GM10248 (cell line): ENCODE measurements at regions of chr3 and their contacts with region 1.

Region 1: DNA sequence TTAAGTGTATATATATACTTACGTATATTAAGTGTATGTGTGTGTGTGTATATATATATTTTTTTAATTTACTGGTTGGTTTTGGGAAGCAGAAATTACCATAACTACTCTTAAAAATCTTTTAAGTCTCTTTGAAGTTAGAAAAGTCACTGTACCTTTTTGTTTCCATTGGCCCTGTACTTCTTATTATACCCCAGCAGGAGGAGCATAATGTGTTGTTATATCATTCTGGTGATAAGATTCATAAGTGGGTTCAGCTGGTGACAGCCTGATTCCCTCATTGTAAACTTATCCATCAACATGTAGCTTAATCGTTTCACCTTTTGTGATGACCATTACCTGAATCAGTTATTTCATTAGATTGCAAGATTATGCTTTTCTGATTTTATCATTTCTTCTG is 30.8 kb downstream of the MLH1 start:
- DNase-seq: no peak
- CTCF ChIP-seq: peak; percentile 32

Region 2: DNA sequence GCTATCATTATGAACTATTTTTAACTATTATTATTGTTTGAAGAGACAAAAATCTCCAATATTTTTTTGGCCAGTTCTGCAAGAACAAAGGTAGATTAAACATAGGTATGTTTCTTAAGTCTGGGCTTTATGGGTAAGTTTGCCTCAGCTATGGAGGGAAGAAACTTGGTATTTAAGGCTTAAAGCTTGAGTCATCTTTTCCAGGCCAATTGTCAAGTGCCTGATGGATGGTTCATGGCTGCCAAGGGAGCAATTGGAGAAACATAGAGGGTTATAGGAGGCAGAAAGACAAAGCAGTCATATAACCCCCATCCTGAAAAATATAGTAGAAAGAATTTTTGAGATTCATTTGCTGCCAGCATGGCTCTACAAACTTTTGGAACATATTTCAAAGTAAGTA is 651.0 kb before region 1 on chr3:
- CTCF ChIA-PET with region 1: no interaction called
- POLR2A ChIA-PET with region 1: no interaction called
- DNase-seq: no peak
- CTCF ChIP-seq: no peak

Region 3: DNA sequence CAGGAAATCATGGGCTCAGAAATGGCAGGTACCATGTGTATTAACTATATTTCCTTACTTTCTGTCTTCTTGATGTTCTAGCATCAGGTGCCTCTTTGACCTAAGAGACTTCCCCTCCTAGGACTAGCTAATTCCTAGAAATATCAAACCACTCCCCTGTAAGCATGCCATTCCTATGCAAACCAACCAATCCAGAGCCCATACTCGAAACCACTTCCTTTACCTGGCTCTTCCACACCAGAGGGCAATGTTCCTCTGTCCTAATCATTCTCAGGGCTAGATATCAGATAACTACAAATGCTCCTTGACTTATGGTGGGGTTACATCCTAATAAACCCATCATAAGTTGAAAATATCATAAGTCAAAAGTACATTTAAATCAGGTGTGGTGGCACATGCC is 50.3 kb before region 1 on chr3:
- CTCF ChIA-PET with region 1: no interaction called
- POLR2A ChIA-PET with region 1: no interaction called
- DNase-seq: no peak
- CTCF ChIP-seq: no peak

Region 4: GRCh38 chr3:37039161-37039846 is 15.2 kb after region 1 on chr3:
- CTCF ChIA-PET with region 1: interaction called, 10 read pairs
- POLR2A ChIA-PET with region 1: no interaction called
- DNase-seq: no peak
- CTCF ChIP-seq: no peak

Region 5: DNA sequence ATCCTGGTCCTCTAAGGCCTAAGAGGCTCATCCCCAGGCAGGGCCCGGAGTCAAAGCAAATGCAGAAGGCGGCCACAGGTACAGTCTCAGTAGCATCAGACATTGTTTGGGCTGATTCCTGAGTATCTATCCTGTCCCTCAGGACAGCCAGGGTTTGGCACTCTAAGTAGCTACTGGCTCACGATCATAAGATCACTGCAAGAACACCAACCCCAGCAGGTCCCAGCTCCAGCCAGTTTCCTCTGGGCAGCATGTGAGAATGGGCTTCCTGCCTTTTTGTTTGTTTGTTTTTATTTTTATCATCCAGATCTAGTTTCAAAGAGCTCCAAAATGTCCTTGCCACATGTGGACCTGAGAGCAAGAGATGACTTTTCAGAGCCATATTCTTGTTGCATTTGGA is 117.6 kb after region 1 on chr3:
- CTCF ChIA-PET with region 1: no interaction called
- POLR2A ChIA-PET with region 1: interaction called, 15 read pairs
- DNase-seq: no peak
- CTCF ChIP-seq: no peak

Region 6: DNA sequence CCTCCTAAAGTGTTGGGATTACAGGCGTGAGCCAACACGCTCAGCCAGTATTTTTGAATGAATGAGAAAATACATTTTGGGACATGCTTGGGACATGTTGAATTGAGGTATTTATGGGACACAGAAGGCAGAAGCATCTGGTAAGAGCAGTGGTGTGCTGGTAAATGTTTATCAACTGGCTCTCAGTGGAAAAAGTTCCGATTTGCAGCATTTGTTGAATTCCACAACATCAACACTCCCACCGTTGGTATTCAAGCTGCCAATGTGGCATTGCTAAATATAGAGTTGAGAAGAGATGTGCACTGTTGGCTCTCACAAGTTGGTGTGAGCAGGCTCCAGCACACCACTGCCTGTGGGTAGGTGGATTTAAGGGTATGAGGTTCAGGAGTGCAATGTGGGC is 186.1 kb after region 1 on chr3:
- CTCF ChIA-PET with region 1: interaction called, 14 read pairs
- POLR2A ChIA-PET with region 1: no interaction called
- DNase-seq: no peak
- CTCF ChIP-seq: no peak